K562 (cell line): ENCODE measurements at regions of chr4 and their contacts with region 1.

Region 1: GRCh38 chr4:63269156-63269555 is 1140.1 kb downstream of the TECRL start:
- DNase-seq: no peak
- ATAC-seq: no peak
- H3K4me3 ChIP-seq: no peak overlapping the region
- H3K27ac ChIP-seq: no peak overlapping the region
- H3K4me1 ChIP-seq: no peaks in the 10 kb centered on the region
- H3K27me3 ChIP-seq: no peaks in the 10 kb centered on the region
- CTCF ChIP-seq: no peak
- EP300 ChIP-seq: no peak
- POLR2A ChIP-seq: no peak
- RAD21 ChIP-seq: no peak

Region 2: GRCh38 chr4:63786171-63786570 is 517.0 kb after region 1 on chr4:
- CTCF ChIA-PET with region 1: no interaction called
- POLR2A ChIA-PET with region 1: no interaction called
- in situ Hi-C with region 1: loop called (anchors 25 kb)
- intact Hi-C with region 1: no loop called
- DNase-seq: no peak
- ATAC-seq: no peak
- H3K4me3 ChIP-seq: no peak overlapping the region
- H3K27ac ChIP-seq: no peak overlapping the region
- H3K4me1 ChIP-seq: no peaks in the 10 kb centered on the region
- H3K27me3 ChIP-seq: no peaks in the 10 kb centered on the region
- CTCF ChIP-seq: no peak
- EP300 ChIP-seq: no peak
- POLR2A ChIP-seq: no peak
- RAD21 ChIP-seq: no peak